Activated B cell treated with CpG ODN at 0.5 μM for 24 hours (primary cell): ENCODE measurements at regions of chr16 and their contacts with region 1.

Region 1: DNA sequence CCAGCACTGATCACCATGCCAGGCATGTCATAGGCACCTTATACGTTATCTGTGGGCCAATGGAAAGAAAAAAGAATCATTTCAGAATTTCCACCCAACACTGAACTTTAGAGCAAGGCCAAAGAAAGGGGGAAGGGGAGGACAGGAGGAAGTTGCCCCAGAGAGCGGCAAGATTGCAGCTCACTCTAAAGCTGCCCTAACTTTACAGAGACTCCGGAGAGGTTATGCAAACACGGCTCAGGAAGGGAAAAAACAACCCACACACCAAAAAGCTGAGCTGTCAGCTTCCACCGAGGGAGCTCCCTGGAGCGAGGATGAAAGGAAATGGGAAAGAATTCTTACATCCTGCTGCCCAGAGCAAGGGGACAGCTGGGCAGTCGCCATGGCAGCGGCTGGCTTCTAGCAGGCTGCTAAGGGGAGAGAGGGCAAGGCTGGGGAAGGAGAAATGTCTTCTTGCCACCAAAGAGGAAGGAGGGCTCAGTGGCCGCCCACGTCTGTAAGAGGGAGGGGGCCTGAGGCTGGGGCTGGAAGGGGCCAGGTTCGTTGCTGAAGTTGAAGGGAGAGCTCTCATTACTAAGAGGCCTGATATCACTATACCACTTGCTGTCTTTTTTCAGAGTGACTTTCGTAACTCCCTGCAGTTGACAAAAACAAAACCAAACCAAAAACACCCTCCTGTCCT is 18.2 kb downstream of the COTL1 start:
- DNase-seq: peak; percentile 55
- ATAC-seq: peak; percentile 40
- H3K4me3 Mint-ChIP-seq: peak overlapping the region; percentile 82
- H3K27ac Mint-ChIP-seq: peak overlapping the region; percentile 97
- H3K4me1 Mint-ChIP-seq: peaks cover 94% of the 10 kb centered on the region
- H3K27me3 Mint-ChIP-seq: no peaks in the 10 kb centered on the region
- CTCF ChIP-seq: no peak

Region 2: DNA sequence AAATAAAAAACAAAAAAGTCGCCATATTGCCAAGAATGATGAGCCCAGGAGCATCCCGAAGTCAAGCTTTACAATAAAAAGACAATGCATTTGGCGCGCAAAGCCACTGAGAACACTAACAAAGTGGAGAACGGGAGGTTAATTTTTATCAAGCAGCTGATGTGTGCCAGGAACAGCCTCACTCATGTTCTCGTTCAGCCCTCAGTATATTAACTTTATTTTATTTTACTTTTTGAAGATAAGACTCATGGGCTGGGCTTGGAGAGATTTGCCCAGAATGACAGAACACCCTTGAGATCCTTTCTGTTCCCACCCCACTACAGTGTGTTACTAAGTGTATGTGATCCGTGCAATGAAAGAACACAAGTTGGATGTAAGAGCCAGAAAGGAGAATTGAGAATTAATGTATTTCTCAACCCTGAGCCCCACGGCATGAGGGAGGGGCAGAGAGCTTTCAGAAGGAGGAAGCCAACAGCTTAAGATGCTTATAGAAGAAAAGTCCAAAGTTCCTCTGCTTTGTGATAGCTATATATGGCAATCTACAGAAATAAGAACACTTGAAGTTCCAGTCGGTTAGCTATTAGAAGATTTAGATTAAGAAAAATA is 30.2 kb before region 1 on chr16:
- CTCF ChIA-PET with region 1: interaction called, 17 read pairs
- POLR2A ChIA-PET with region 1: interaction called, 12 read pairs
- intact Hi-C with region 1: no loop called
- DNase-seq: no peak
- ATAC-seq: peak; percentile 72
- H3K4me3 Mint-ChIP-seq: no peak overlapping the region
- H3K27ac Mint-ChIP-seq: peak overlapping the region; percentile 64
- H3K4me1 Mint-ChIP-seq: peaks cover 50% of the 10 kb centered on the region
- H3K27me3 Mint-ChIP-seq: no peaks in the 10 kb centered on the region
- CTCF ChIP-seq: no peak

Region 3: DNA sequence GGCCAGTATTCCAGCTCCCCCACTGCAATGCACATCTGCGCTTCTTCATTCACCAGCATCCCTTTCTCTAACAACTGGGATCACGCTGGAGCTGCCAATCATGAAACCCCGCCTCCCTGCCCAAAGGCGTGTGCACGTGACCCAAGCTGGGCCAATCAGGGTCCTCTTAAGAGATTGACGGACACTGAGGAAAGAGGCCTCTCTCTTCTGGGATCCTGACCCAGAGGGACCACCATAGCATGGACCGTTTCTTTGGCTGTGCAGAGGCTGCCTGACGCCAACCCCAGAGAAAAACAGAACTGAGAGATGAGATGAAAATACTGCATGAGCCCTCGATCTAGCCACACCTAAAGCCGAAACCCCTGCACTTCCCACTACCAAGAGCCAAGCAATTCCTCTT is 13.8 kb before region 1 on chr16:
- CTCF ChIA-PET with region 1: interaction called, 4 read pairs
- POLR2A ChIA-PET with region 1: interaction called, 99 read pairs
- intact Hi-C with region 1: loop called (anchors 1 kb)
- DNase-seq: no peak
- ATAC-seq: peak; percentile 88
- H3K4me3 Mint-ChIP-seq: peak overlapping the region; percentile 82
- H3K27ac Mint-ChIP-seq: peak overlapping the region; percentile 91
- H3K4me1 Mint-ChIP-seq: peaks cover 66% of the 10 kb centered on the region
- H3K27me3 Mint-ChIP-seq: no peaks in the 10 kb centered on the region
- CTCF ChIP-seq: no peak